ENCODE measurements at regions of chr2 and their contacts with region 1.

Region 1: GRCh38 chr2:43934567-43934966 is 61.2 kb downstream of the LRPPRC start:
- DNase-seq: no peak
- ATAC-seq: no peak
- H3K4me3 ChIP-seq: no peak overlapping the region
- H3K27ac ChIP-seq: no peak overlapping the region
- H3K4me1 ChIP-seq: peaks cover 9% of the 10 kb centered on the region
- CTCF ChIP-seq: no peak
- EP300 ChIP-seq: no peak
- POLR2A ChIP-seq: no peak
- RAD21 ChIP-seq: no peak

Region 2: DNA sequence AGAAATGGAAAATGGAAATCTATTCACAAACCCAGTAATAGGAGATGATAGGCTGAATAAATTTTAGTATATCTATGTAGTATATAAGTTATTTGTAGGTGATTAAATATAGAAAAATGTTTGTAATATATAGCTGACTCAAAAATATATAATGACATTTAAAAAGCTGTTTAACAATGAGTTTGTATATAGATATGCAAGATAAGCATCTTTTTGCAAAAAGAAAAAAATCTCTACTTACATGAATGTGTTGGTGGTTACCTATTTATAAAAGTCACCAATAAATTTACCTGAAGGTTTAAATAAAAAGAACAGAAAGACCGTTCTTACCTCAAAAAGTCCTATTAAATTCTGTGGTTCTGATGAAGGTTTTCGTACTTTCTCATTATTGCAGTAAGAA is 10.1 kb before region 1 on chr2:
- CTCF ChIA-PET with region 1: interaction called, 11 read pairs
- POLR2A ChIA-PET with region 1: no interaction called
- DNase-seq: no peak
- ATAC-seq: no peak
- H3K4me3 ChIP-seq: no peak overlapping the region
- H3K27ac ChIP-seq: no peak overlapping the region
- H3K4me1 ChIP-seq: no peaks in the 10 kb centered on the region
- CTCF ChIP-seq: no peak
- EP300 ChIP-seq: no peak
- POLR2A ChIP-seq: no peak
- RAD21 ChIP-seq: no peak